WTC11 (cell line): ENCODE measurements at regions of chr7 and their contacts with region 1.

Region 1: DNA sequence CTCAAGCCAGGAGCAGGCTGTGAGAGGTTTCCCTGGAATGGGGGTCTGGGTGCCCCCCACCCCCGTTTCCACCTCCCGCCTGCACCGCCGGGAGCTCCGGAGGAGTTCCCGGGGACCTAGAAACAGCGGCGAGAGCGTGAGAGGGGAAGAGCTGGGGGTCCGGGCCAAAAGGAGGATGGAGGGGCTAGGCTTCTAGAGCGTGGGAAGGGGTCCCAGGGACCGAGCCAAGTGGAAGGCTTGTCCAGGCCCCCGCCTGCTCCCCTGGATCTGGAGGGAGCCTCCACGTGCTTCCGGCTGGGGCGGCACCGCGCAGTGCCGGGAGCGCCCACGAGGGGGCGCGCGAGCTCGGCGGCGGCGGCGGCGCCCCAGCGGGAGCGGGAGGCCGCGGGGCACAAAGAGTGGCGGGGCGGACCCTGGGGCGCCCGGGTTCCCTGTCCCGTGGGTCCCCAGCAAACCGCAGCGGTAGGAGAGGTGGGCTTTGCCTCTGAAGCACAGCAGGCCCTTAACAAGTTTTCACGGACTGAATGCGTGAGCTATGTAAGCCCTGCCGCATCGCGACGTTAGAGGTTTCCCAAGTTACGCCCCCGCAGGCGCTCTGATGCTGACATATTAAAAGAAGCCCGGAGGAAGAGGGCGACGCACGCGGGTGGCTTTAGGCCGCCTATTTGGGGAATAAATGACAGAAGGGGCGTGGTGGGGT is 104.4 kb upstream of the LRRC4 start:
- DNase-seq: peak; percentile 55
- ATAC-seq: peak; percentile 76
- H3K4me3 Mint-ChIP-seq: peak overlapping the region; percentile 71
- H3K27ac Mint-ChIP-seq: no peak overlapping the region
- H3K4me1 Mint-ChIP-seq: peaks cover 10% of the 10 kb centered on the region
- H3K27me3 Mint-ChIP-seq: peaks cover 74% of the 10 kb centered on the region
- CTCF ChIP-seq: peak; percentile 91

Region 2: DNA sequence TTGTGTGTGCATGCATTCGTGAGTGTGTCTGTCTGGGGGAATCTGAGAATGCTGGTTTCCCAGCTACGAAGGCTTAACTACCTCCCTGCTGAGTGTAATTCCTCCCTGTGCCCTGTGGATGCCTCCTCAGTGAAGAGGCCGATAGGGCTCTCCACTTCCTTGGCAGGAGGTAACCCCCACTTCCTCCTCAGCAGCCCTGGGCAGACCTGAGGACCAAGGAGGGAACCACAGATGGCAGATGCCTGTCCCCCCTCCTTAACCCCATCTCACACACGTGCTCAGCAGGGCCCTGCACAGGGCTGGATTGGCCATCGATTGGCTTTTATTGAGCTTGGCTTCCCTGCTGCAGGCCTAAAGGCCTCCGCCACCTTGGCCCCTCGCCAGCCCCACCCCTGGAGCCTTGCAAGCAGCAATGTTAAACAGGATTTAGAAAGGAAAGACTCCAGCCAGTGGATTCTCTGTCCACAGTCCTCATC is 58.8 kb before region 1 on chr7:
- CTCF ChIA-PET with region 1: no interaction called
- POLR2A ChIA-PET with region 1: no interaction called
- DNase-seq: no peak
- ATAC-seq: no peak
- H3K4me3 Mint-ChIP-seq: no peak overlapping the region
- H3K27ac Mint-ChIP-seq: no peak overlapping the region
- H3K4me1 Mint-ChIP-seq: peaks cover 10% of the 10 kb centered on the region; the same call in 1 of the 2 replicates
- H3K27me3 Mint-ChIP-seq: no peaks in the 10 kb centered on the region
- CTCF ChIP-seq: no peak

Region 3: DNA sequence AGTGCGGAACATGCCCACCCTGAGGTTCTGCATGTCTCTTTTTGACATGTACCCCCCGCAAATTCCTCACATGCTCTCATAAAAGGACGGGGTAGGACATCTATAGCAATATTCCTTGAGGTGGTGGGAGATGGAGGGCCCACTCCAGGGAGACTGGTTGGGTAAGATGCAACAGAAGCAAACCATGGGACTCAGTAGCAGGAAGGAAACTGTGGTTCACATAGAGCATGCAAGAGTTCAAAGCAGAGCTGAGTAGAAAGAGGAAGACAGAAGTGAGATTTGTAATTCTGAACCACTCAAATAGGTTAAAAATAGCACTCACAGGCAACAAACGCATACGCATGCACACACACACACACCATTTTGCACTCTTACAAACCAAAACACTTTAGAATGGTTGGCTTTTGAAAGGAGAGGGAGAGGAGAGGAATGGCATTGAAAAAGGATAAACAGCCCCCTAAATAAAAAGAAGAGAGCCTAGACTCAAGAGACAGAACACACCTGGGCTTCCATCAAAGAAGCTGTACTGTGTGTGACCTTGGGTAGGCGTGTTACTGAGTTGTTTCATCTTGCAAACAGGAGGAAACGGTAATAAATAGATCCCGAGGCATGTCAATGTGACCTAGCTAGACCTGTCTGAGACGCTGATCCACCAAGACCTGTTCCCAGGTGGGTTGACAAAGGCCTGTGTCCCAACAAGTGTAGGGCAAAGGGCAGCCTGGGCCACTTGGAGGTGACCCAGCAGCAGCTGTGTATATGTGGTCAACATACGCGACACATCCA is 26.8 kb before region 1 on chr7:
- CTCF ChIA-PET with region 1: interaction called, 17 read pairs
- POLR2A ChIA-PET with region 1: interaction called, 4 read pairs
- DNase-seq: no peak
- ATAC-seq: no peak
- H3K4me3 Mint-ChIP-seq: no peak overlapping the region
- H3K27ac Mint-ChIP-seq: no peak overlapping the region
- H3K4me1 Mint-ChIP-seq: peaks cover 3% of the 10 kb centered on the region; the same call in 1 of the 2 replicates
- H3K27me3 Mint-ChIP-seq: peaks cover 49% of the 10 kb centered on the region
- CTCF ChIP-seq: no peak

Region 4: GRCh38 chr7:128121711-128122530 is 13.7 kb before region 1 on chr7:
- CTCF ChIA-PET with region 1: interaction called, 20 read pairs
- POLR2A ChIA-PET with region 1: no interaction called
- DNase-seq: no peak
- ATAC-seq: peak; percentile 56
- H3K4me3 Mint-ChIP-seq: no peak overlapping the region
- H3K27ac Mint-ChIP-seq: no peak overlapping the region
- H3K4me1 Mint-ChIP-seq: peaks cover 23% of the 10 kb centered on the region
- H3K27me3 Mint-ChIP-seq: peaks cover 3% of the 10 kb centered on the region
- CTCF ChIP-seq: no peak

Region 5: DNA sequence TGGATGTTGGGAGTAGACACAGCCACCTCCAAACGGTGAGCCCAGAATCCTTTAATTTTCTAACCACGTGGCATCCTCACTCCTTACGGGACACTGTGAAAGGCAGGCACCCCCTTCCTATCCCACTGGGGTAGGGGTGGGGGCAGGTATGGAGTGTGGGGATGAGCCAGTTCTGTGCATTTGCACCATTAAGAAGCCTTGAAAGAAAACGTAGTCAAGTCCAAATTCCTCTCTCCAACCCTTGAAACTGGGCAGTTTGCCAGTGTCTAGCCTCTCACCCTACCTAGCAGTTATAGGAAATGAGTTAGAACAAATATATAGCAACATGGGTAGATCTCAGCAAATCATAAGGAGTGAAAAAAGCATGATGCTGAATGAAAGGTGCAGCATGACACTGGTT is 13.0 kb after region 1 on chr7:
- CTCF ChIA-PET with region 1: interaction called, 19 read pairs
- POLR2A ChIA-PET with region 1: no interaction called
- DNase-seq: no peak
- ATAC-seq: no peak
- H3K4me3 Mint-ChIP-seq: no peak overlapping the region
- H3K27ac Mint-ChIP-seq: no peak overlapping the region
- H3K4me1 Mint-ChIP-seq: peaks cover 28% of the 10 kb centered on the region
- H3K27me3 Mint-ChIP-seq: peaks cover 21% of the 10 kb centered on the region
- CTCF ChIP-seq: no peak

Region 6: DNA sequence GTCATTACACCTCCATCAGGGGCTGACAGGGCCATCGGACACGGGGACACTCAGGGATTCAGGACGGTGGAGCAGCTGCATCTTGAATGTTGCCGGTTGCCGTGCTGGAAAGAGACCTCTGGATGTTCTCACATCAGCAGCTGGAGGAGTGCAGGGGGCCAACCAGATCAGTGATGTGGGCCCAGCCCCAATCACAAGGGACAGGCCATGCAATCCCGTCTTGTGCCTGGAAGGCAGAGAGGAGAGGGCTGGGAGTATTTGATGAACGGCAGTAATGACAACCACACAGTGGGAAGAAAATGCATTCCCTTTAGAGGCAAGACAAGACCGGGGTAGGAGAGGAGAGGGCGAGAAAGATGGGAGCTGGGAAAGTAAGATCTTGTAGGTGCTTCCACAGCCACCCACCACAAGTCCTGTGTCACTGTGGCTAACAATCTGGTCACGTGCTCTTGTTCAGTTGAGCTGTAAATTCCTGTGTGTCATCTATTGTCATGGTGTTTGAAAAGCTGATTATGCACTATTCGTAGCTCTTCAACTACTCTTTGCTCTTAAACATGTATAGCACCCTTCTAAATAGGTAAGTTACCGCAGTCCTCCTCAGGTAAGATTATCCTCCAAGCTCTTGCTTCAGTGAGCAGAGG is 19.6 kb after region 1 on chr7:
- CTCF ChIA-PET with region 1: interaction called, 35 read pairs
- POLR2A ChIA-PET with region 1: no interaction called
- DNase-seq: no peak
- ATAC-seq: peak; percentile 70
- H3K4me3 Mint-ChIP-seq: no peak overlapping the region
- H3K27ac Mint-ChIP-seq: no peak overlapping the region
- H3K4me1 Mint-ChIP-seq: peaks cover 22% of the 10 kb centered on the region
- H3K27me3 Mint-ChIP-seq: peaks cover 29% of the 10 kb centered on the region
- CTCF ChIP-seq: no peak

Region 7: DNA sequence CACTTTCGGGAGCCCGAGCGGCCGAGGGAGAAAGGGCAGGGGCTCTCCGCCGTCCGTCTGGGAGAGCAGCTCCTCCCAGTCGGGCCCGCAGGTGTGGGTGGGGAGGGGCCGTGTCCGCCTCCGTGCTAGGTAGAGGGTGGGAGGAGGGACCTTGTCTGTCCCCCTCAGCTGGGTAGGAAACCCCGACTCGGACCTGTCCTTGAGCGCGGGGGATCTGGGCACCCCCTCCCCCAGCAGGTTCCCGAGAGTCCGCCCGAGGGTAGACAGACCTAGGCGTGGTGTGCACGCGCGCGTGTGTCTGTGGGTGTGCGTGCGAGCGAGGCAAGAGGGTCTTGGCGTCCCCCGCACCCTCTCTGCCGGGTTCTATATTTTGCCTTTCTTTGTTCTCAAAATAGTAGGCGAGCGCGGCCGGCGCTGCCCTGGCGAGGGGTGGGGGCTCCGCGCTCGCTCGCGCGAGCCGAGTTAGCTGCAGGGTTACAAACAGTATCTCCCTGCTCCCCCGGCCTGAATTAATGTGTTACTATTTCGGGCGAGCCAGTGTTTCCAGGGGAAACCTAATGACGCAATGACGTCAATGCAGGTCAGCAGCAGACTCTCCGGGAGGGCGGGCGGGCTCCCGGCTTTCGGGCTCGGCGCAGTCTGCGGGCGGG is 31.5 kb after region 1 on chr7:
- CTCF ChIA-PET with region 1: interaction called, 25 read pairs
- POLR2A ChIA-PET with region 1: interaction called, 3 read pairs
- DNase-seq: peak; percentile 44
- ATAC-seq: peak; percentile 25
- H3K4me3 Mint-ChIP-seq: peak overlapping the region; percentile 78
- H3K27ac Mint-ChIP-seq: no peak overlapping the region
- H3K4me1 Mint-ChIP-seq: peaks cover 31% of the 10 kb centered on the region
- H3K27me3 Mint-ChIP-seq: peaks cover 98% of the 10 kb centered on the region
- CTCF ChIP-seq: no peak

Region 8: GRCh38 chr7:128191136-128191844 is 55.6 kb after region 1 on chr7:
- CTCF ChIA-PET with region 1: interaction called, 18 read pairs
- POLR2A ChIA-PET with region 1: interaction called, 3 read pairs
- DNase-seq: no peak
- ATAC-seq: no peak
- H3K4me3 Mint-ChIP-seq: no peak overlapping the region
- H3K27ac Mint-ChIP-seq: no peak overlapping the region
- H3K4me1 Mint-ChIP-seq: peaks cover 18% of the 10 kb centered on the region
- H3K27me3 Mint-ChIP-seq: peaks cover 45% of the 10 kb centered on the region
- CTCF ChIP-seq: no peak

Region 9: DNA sequence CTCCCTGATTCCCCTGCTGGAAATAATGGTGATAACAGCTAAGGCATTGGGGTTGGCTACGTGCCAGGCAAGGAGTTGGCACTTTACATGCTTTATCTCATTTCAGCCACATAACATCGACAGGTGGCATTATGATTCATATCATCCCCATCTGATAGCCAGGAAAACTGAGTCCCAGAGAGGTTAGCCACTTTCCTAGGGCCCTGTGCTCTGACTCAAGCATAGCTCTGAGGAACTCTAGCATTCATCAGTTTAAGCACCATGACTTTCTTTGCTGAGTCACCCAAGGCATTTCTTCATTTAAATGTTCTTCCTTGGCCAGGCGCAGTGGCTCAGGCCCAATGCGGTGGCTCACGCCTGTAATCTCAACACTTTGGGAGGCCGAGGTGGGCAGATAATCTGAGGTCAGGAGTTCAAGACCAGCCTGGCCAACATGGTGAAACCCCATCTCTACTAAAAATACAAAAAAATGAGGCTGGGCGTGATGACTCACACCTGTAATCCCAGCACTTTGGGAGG is 112.1 kb after region 1 on chr7:
- CTCF ChIA-PET with region 1: no interaction called
- POLR2A ChIA-PET with region 1: no interaction called
- DNase-seq: no peak
- ATAC-seq: no peak
- H3K4me3 Mint-ChIP-seq: no peak overlapping the region
- H3K27ac Mint-ChIP-seq: no peak overlapping the region
- H3K4me1 Mint-ChIP-seq: no peaks in the 10 kb centered on the region
- H3K27me3 Mint-ChIP-seq: peaks cover 3% of the 10 kb centered on the region; the same call in 1 of the 2 replicates
- CTCF ChIP-seq: no peak